ENCODE measurements at regions of chr6 and their contacts with region 1.

Region 1: DNA sequence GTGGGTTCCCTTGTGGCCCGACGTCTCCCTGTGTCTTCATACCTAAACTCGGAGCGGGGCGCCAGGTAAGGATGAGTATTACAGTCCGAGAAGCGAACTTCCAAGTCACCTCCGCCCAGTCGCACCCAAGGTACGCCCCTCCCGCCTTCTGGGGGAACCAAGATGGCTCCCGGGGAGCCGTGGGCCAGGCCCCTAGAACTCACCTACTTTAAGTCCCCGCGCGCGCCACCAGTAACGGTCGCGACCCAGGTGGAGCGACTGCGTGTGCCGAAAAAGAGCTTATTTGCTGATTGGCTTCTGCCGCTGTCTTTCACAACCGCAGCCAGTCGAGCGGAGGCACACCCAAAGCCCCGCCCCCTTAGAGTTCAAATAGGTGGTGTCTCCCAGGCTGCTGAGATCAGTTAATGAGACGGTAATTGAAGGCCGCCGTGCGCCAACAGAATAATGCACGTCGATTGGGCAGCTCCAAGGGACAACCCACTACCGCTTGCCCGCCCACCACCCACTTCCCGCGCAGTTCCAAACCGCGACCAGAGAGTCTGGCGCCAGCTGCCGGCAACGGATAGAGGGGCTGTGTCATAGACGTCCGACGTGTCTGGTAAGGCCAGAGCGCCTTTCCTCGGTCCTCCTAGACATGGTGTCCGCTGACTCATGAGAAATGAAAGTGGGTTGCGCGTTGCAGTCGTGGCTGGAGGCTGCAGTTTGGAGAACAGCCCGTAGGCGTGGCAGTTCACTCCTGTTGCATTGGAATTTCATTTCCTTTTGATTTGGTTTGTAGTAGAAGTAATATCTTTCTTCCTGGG is at the start of gene MDC1:
- DNase-seq: peak; percentile 100
- H3K4me3 ChIP-seq: peak within 1 kb of the TSS; percentile 56 to 69 (median 61)
- H3K27ac ChIP-seq: peak within 1 kb of the TSS; percentile 78
- H3K4me1 ChIP-seq: peaks cover 33% of the 10 kb centered on the region
- H3K27me3 ChIP-seq: no peaks in the 10 kb centered on the region
- CTCF ChIP-seq: peak in 1 of 2 donors; percentile 43
- total RNA-seq, gene MDC1: 12.8 to 36.7 TPM

Region 2: DNA sequence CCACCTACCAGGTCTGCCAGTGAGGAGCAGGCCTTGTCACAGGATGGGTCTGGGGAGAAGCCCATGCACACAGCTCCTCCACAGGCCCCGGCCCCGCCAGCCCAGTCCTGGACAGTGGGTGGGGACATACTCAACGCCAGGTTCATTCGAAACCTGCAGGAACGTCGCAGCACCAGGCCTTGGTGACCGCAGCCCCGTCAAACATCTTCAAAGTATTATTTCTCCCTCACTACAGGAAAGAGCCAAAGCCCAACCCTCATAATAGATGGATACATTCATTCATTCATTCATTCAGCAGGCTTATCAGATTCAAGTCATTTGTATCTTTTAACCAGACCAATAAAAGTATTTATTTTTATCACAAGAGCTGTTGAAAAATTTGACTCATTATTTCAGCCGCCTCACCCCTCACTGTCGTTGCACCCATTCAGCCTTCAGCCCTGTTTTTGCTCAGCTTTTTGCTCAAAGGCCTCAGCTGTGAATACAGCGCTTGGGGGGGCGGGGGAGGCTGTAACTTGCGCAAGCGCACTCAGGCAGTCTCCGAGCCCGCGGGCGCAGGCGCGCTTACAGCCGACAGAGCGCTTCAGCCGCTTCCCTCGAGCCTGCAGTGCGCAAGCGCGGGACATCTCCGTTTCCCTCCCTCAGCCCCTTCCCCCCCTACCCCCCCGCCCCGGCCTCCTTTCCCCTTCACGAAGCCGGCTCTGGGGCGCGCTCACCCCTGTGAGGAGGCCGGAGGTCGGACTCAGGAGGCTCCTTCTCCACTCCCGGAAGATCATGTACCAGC is 70.6 kb before region 1 on chr6 and contains the start of gene C6orf136:
- CTCF ChIA-PET with region 1: no interaction called
- dilution Hi-C with region 1: loop called (anchors 10 kb)
- in situ Hi-C with region 1: no loop called
- intact Hi-C with region 1: loop called (anchors 2 kb)
- DNase-seq: peak; percentile 83
- H3K4me3 ChIP-seq: peak within 1 kb of the TSS; percentile 81 to 100 (median 97)
- H3K27ac ChIP-seq: peak within 1 kb of the TSS; percentile 69
- H3K4me1 ChIP-seq: peaks cover 14% of the 10 kb centered on the region
- H3K27me3 ChIP-seq: no peaks in the 10 kb centered on the region
- CTCF ChIP-seq: no peak
- total RNA-seq, gene C6orf136: 1.8 to 11.2 TPM

Region 3: DNA sequence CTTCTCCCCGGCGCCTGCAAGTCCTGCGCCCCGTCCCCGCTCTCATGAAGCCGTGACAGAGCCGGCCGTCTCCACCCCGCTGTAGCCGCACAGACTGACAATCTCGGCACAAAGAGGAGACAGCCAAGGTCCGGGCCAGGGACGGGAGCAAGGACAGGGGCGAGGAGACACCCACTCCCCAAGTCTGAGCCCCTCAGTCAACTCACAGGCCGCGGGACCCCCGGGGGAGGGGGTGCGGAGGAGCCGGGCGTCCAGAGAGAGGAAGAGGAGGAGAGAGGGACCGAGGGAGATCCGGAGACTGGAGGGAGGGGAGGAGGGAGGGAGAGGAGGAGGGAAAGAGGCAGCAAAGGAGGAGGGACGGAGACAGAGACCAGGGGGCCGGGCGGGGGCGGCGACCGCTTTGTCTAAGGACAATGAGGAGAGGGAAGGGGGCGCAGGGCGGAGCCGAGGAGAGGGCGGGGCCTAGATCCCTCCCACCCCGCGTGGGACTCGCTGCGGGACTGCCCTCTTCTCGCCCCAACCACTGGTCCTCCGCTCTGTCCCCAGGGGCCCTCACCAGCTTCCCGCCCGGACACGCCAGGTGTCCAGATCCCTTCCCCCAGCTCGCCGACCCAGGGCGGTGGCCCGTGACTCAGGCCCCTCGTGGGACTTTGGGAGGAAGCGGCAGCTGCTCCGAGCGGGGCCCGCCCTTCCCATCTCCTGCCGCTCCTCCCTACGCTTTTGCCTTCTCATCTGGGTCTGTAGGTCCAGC is 30.2 kb before region 1 on chr6:
- CTCF ChIA-PET with region 1: interaction called, 5 read pairs
- dilution Hi-C with region 1: no loop called
- in situ Hi-C with region 1: loop called (anchors 5 kb)
- intact Hi-C with region 1: loop called (anchors 1 kb)
- DNase-seq: peak; percentile 99
- H3K4me3 ChIP-seq: peak overlapping the region; percentile 77 to 88 (median 83)
- H3K27ac ChIP-seq: peak overlapping the region; percentile 86
- H3K4me1 ChIP-seq: peaks cover 42% of the 10 kb centered on the region
- H3K27me3 ChIP-seq: no peaks in the 10 kb centered on the region
- CTCF ChIP-seq: no peak